ENCODE measurements at regions of chr1 and their contacts with region 1.

Region 1: GRCh38 chr1:151156515-151156819 is at the start of gene TNFAIP8L2:
- DNase-seq: peak in 1 of 2 donors; percentile 61
- H3K4me3 ChIP-seq: no peak within 1 kb of the TSS
- CTCF ChIP-seq: no peak
- POLR2A ChIP-seq: no peak
- total RNA-seq, gene TNFAIP8L2: 1.2 to 5.6 (median 3.0) TPM

Region 2: DNA sequence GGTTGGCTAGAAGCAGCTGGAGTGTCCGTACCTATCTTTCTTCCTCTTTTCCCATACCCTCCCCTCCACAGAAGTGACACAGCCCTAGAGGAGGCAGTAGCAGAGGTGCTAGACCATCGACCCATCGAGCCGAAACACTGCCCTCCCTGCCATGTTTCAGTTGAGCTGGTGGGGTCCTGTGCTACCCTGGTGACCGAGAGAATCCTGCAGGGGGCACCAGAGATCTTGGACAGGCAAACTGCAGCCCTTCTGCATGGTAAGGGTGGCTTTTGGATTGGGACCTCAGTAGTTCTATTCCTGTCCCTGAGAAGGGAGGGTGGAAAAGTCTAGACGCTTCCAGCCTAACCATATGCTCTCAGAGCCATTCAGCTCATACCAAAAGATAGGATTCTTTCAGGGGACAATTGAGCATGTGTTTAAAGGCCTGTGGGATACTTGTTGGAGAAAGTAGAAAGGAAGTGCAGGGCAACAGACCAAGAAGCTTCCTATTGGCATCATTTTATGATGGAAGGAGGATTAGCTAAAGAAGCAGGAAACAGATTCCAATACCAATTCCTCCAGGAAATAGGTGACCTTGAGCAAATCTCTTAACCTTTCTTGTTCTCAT is 131.8 kb before region 1 on chr1:
- intact Hi-C with region 1: loop called (anchors 5 kb)
- DNase-seq: peak; percentile 73 to 93
- H3K4me3 ChIP-seq: no peak overlapping the region
- CTCF ChIP-seq: peak in 1 of 3 donors; percentile 13
- POLR2A ChIP-seq: no peak

Region 3: GRCh38 chr1:151106894-151107293 is 49.6 kb before region 1 on chr1:
- intact Hi-C with region 1: loop called (anchors 10 kb)
- DNase-seq: no peak
- H3K4me3 ChIP-seq: no peak overlapping the region
- CTCF ChIP-seq: no peak
- POLR2A ChIP-seq: no peak